Panc1 (cell line): ENCODE measurements at regions of chr1 and their contacts with region 1.

Region 1: GRCh38 chr1:176073524-176074157 is 133.4 kb downstream of the COP1 start:
- DNase-seq: peak; percentile 33
- ATAC-seq: peak; percentile 89
- H3K4me3 ChIP-seq: no peak overlapping the region
- H3K27ac ChIP-seq: no peak overlapping the region
- H3K4me1 ChIP-seq: no peaks in the 10 kb centered on the region
- H3K27me3 ChIP-seq: no peaks in the 10 kb centered on the region
- CTCF ChIP-seq: peak; percentile 72

Region 2: DNA sequence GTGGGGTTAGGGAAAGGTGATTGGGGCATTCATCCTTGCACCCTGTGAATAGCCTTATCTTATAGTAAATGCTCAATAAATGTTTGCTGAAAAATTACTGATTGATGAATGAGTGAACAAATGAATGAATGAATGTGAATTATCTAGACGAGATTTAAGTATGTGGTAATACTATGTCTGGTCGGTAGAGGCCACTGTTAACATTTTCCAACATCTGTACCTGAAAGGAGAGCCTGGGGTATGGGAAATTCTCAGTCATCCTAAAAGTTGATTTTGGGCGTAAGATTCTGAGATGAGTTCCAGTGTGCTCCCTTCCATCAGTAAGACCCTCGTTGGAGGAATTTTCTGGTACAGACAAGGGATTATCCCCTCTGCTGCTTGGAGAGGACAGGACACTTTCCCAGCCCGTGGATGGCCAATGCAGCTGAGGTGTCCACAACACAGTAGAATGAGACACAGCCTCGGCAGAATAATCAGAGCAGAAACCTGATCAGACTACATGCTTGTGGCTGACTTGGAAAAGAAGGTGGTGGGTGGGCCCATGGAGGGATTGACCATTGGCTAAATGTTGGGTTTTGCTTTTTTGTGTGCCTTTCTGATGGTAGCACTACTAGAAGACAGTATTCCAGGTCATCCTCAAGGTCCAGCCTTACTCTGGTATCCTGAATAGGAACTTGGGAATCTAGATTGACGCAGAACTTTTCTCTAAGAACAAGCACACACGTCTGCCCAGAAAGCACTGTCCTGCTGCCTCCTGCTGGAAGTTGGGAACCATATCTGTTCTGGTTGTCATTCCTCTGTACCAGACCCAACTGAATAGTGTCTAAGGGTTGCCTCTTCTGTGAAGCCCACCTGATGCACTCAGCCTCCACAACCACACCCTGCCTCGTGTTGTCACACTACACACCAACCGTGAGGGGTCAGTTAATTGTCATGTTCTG is 592.2 kb before region 1 on chr1:
- CTCF ChIA-PET with region 1: no interaction called
- POLR2A ChIA-PET with region 1: no interaction called
- in situ Hi-C with region 1: no loop called
- intact Hi-C with region 1: loop called (anchors 5 kb)
- DNase-seq: peak; percentile 18
- ATAC-seq: peak; percentile 80; the same call in 1 of the 2 replicates
- H3K4me3 ChIP-seq: no peak overlapping the region
- H3K27ac ChIP-seq: no peak overlapping the region
- H3K4me1 ChIP-seq: no peaks in the 10 kb centered on the region
- H3K27me3 ChIP-seq: peaks cover 8% of the 10 kb centered on the region
- CTCF ChIP-seq: peak; percentile 73

Region 3: GRCh38 chr1:176101924-176102642 is 28.4 kb after region 1 on chr1:
- CTCF ChIA-PET with region 1: interaction called, 13 read pairs
- POLR2A ChIA-PET with region 1: no interaction called
- in situ Hi-C with region 1: no loop called
- intact Hi-C with region 1: no loop called
- DNase-seq: no peak
- ATAC-seq: no peak
- H3K4me3 ChIP-seq: no peak overlapping the region
- H3K27ac ChIP-seq: no peak overlapping the region
- H3K4me1 ChIP-seq: no peaks in the 10 kb centered on the region
- H3K27me3 ChIP-seq: no peaks in the 10 kb centered on the region
- CTCF ChIP-seq: no peak

Region 4: GRCh38 chr1:176159993-176160392 is 86.4 kb after region 1 on chr1:
- CTCF ChIA-PET with region 1: no interaction called
- POLR2A ChIA-PET with region 1: no interaction called
- in situ Hi-C with region 1: no loop called
- intact Hi-C with region 1: no loop called
- DNase-seq: no peak
- ATAC-seq: no peak
- H3K4me3 ChIP-seq: no peak overlapping the region
- H3K27ac ChIP-seq: no peak overlapping the region
- H3K4me1 ChIP-seq: no peaks in the 10 kb centered on the region
- H3K27me3 ChIP-seq: no peaks in the 10 kb centered on the region
- CTCF ChIP-seq: no peak

Region 5: GRCh38 chr1:176225911-176226310 is 152.3 kb after region 1 on chr1:
- CTCF ChIA-PET with region 1: no interaction called
- POLR2A ChIA-PET with region 1: no interaction called
- in situ Hi-C with region 1: no loop called
- intact Hi-C with region 1: no loop called
- DNase-seq: no peak
- ATAC-seq: no peak
- H3K4me3 ChIP-seq: no peak overlapping the region
- H3K27ac ChIP-seq: no peak overlapping the region
- H3K4me1 ChIP-seq: no peaks in the 10 kb centered on the region
- H3K27me3 ChIP-seq: no peaks in the 10 kb centered on the region
- CTCF ChIP-seq: no peak